ENCODE measurements at regions of chr17 and their contacts with region 1.

Region 1: GRCh38 chr17:12667299-12667958 is 1.7 kb downstream of the MYOCD start:
- H3K4me3 ChIP-seq: no peak overlapping the region
- H3K27ac ChIP-seq: no peak overlapping the region
- H3K4me1 ChIP-seq: 0 out of 2 replicates have a peak, but pooled peaks cover 5% of the 10 kb centered on the region
- CTCF ChIP-seq: peak; percentile 51; the same call in 1 of the 2 replicates

Region 2: DNA sequence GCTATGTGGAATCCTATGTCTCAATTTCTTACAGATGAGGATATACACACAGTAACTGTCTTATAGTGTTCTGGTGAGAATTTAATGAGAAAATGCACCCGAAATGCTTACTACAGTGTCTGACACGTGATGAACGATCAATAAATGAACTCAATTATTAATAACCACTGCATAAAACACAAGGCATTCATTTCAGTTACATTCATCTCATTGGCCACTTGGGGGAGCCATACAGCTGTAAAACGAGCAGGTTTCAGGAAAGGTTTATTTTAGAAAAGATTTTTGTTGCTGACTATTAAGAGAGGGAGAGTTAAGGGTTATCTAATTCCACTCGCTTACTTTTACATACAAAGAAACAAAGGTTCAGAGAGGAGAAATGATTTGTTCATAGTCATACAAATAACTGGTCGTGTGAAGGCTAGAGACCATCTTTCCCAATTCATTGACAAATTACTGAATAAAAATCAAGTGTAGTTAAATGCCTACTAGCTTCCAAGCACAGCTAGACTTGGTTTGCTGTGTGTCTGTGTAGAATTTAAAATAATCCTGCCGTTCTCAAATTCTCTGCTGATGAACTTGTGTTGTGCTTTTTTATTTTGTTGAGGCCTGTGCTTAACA is 486.7 kb before region 1 on chr17:
- CTCF ChIA-PET with region 1: interaction called, 25 read pairs
- POLR2A ChIA-PET with region 1: no interaction called
- H3K4me3 ChIP-seq: no peak overlapping the region
- H3K27ac ChIP-seq: no peak overlapping the region
- H3K4me1 ChIP-seq: no peaks in the 10 kb centered on the region
- CTCF ChIP-seq: peak; percentile 22; the same call in 1 of the 2 replicates

Region 3: DNA sequence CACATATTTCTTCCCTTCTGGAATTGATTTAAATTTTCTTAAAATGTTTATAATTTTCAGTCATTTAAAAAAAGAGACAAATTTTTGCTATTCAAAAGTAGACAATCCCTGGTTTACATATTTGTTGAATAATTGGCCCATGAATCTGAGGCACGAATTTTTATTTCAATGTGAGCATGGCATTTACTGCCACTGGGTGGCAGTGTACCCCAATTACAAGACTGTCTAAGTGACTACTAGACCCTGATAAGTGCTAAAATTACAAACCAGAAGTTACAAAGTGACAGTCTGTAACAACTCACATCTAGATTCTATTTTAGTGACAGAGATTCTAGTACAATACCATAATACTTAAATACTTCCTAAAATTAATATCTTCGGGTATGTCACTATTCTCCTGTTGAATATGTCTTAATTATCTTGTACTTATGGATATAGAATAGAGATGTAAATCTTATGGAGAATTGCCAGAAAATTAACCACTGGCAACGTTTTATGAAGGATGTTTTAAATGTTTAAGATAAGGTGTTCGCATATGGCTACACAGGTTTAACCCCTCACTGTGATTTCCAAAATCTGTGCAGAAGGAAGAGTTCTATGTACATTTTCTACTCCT is 410.9 kb before region 1 on chr17:
- CTCF ChIA-PET with region 1: interaction called, 133 read pairs
- POLR2A ChIA-PET with region 1: no interaction called
- H3K4me3 ChIP-seq: no peak overlapping the region
- H3K27ac ChIP-seq: no peak overlapping the region
- H3K4me1 ChIP-seq: no peaks in the 10 kb centered on the region
- CTCF ChIP-seq: peak; percentile 25; the same call in 1 of the 2 replicates

Region 4: DNA sequence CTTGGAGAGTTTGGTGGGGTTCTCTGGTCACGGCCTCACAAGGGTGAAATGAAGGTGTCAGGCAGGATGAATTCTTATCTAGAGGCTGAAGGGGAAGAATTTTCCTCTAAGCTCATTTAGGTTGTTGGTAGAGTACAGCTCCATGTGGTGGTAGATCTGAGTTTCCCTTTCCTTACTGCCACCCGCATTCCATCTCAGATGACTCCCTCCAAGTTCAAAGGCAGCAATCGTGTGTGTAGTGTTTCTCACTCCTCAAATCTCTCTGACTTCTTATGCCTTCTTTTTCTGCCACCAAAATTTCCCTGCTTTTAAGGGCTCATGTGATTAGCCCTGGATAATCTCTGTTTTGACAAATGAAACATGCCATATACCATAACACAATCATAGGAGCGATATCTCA is 137.3 kb before region 1 on chr17:
- CTCF ChIA-PET with region 1: interaction called, 11 read pairs
- POLR2A ChIA-PET with region 1: no interaction called
- H3K4me3 ChIP-seq: no peak overlapping the region
- H3K27ac ChIP-seq: no peak overlapping the region
- H3K4me1 ChIP-seq: no peaks in the 10 kb centered on the region
- CTCF ChIP-seq: no peak

Region 5: DNA sequence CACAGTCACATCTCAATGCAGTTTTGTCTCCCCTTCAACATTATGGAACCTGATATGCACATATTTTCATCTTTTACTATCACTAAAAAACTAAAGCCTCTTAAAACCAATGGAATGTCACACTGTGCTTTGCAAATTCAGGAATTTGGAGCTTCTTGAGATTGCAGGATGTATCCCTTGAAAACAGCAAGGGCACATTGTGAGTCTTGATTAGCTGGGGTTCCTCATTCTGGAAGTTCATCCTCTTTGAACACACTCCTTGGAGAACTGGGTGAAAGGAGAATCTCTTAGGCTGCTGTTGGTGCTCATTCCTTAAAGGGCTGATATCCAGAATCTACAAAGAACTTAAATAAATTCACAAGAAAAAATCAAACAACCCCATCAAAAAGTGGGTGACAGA is 22.8 kb before region 1 on chr17:
- CTCF ChIA-PET with region 1: no interaction called
- POLR2A ChIA-PET with region 1: no interaction called
- H3K4me3 ChIP-seq: no peak overlapping the region
- H3K27ac ChIP-seq: no peak overlapping the region
- H3K4me1 ChIP-seq: no peaks in the 10 kb centered on the region
- CTCF ChIP-seq: no peak

Region 6: GRCh38 chr17:12680407-12680897 is 13.0 kb after region 1 on chr17:
- CTCF ChIA-PET with region 1: interaction called, 14 read pairs
- POLR2A ChIA-PET with region 1: no interaction called
- H3K4me3 ChIP-seq: no peak overlapping the region
- H3K27ac ChIP-seq: no peak overlapping the region
- H3K4me1 ChIP-seq: no peaks in the 10 kb centered on the region
- CTCF ChIP-seq: no peak

Region 7: GRCh38 chr17:12744298-12744697 is 76.9 kb after region 1 on chr17:
- CTCF ChIA-PET with region 1: interaction called, 30 read pairs
- POLR2A ChIA-PET with region 1: no interaction called
- H3K4me3 ChIP-seq: no peak overlapping the region
- H3K27ac ChIP-seq: no peak overlapping the region
- H3K4me1 ChIP-seq: peaks cover 2% of the 10 kb centered on the region; the same call in 1 of the 2 replicates
- CTCF ChIP-seq: no peak